Activated naive CD4-positive, alpha-beta T cell treated with anti-CD3 and anti-CD28 coated beads for 36 hours (primary cell): ENCODE measurements at regions of chr6 and their contacts with region 1.

Region 1: GRCh38 chr6:108446629-108447150 is 114.0 kb upstream of the FOXO3 start:
- DNase-seq: no peak
- H3K4me3 Mint-ChIP-seq: no peak overlapping the region
- H3K27ac Mint-ChIP-seq: no peak overlapping the region
- H3K4me1 Mint-ChIP-seq: peaks cover 20% of the 10 kb centered on the region
- H3K27me3 Mint-ChIP-seq: peaks cover 11% of the 10 kb centered on the region

Region 2: DNA sequence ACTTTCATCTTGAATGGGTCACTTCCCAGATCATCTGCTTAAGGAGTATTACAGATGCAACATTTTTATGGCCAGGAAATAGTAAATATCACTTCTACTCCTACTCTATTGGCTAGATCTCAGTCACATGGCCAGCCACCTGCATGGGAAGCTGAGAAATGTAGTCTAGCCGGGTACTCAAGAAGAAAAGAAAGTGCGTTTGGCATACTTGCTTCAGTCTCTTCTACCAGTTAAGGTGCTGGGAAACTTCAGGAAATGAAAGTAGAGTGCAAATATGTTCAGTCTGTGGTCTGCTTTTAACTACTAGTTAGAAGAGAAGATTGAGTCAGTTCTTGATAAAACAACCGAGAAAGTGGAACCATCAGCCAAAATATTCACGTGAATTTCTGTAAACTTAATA is 1116.5 kb before region 1 on chr6:
- CTCF ChIA-PET with region 1: no interaction called
- intact Hi-C with region 1: loop called (anchors 1 kb)
- DNase-seq: peak; percentile 68
- H3K4me3 Mint-ChIP-seq: peak overlapping the region; percentile 33
- H3K27ac Mint-ChIP-seq: peak overlapping the region; percentile 61
- H3K4me1 Mint-ChIP-seq: peaks cover 13% of the 10 kb centered on the region
- H3K27me3 Mint-ChIP-seq: no peaks in the 10 kb centered on the region

Region 3: DNA sequence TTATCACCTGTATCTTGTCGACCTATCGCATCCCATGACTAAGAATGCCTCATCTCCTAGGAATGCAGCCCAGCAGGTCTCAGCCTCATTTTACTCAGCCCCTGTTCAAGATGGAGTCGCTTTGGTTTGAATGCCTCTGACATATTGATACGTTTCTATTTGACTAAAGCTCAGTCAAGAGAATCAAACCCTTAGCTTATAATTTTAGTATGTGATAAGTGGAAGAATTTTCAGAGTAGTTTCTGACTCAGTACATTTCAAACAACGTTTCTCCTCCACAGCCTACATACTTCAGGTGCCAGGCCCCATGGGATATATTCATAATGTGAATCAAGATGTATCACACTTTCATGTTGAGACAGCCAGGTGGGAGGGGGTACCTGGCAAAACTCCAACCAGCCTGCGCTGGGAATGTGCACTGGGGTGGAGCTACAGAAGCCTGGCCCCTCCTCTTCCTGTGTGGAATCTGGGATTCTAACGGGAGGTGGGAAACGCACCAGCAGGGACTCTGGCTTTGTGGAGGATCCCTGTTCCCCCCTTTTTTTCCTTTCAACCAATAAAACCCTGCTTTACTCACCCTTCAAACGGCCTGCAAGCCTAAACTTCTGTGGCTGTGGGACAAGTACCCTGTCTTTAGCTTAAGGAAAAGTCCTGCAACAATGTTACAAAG is 481.9 kb before region 1 on chr6:
- CTCF ChIA-PET with region 1: no interaction called
- intact Hi-C with region 1: loop called (anchors 1 kb)
- DNase-seq: peak; percentile 90
- H3K4me3 Mint-ChIP-seq: no peak overlapping the region
- H3K27ac Mint-ChIP-seq: peak overlapping the region; percentile 92
- H3K4me1 Mint-ChIP-seq: peaks cover 21% of the 10 kb centered on the region
- H3K27me3 Mint-ChIP-seq: no peaks in the 10 kb centered on the region

Region 4: GRCh38 chr6:108260809-108261569 is 185.7 kb before region 1 on chr6 and contains the start of gene SNX3:
- CTCF ChIA-PET with region 1: interaction called, 3 read pairs
- intact Hi-C with region 1: loop called (anchors 1 kb)
- DNase-seq: peak; percentile 90
- H3K4me3 Mint-ChIP-seq: peak within 1 kb of the TSS; percentile 77
- H3K27ac Mint-ChIP-seq: peak within 1 kb of the TSS; percentile 89
- H3K4me1 Mint-ChIP-seq: peaks cover 19% of the 10 kb centered on the region
- H3K27me3 Mint-ChIP-seq: no peaks in the 10 kb centered on the region
- total RNA-seq, gene SNX3: 59.9 to 65.7 TPM

Region 5: GRCh38 chr6:108348655-108349349 is 97.9 kb before region 1 on chr6:
- CTCF ChIA-PET with region 1: no interaction called
- intact Hi-C with region 1: loop called (anchors 1 kb)
- DNase-seq: no peak
- H3K4me3 Mint-ChIP-seq: no peak overlapping the region
- H3K27ac Mint-ChIP-seq: peak overlapping the region; percentile 87
- H3K4me1 Mint-ChIP-seq: peaks cover 10% of the 10 kb centered on the region
- H3K27me3 Mint-ChIP-seq: no peaks in the 10 kb centered on the region

Region 6: GRCh38 chr6:108667993-108668392 is 221.3 kb after region 1 on chr6:
- CTCF ChIA-PET with region 1: no interaction called
- intact Hi-C with region 1: loop called (anchors 1 kb)
- DNase-seq: no peak
- H3K4me3 Mint-ChIP-seq: no peak overlapping the region
- H3K27ac Mint-ChIP-seq: no peak overlapping the region
- H3K4me1 Mint-ChIP-seq: peaks cover 44% of the 10 kb centered on the region
- H3K27me3 Mint-ChIP-seq: no peaks in the 10 kb centered on the region

Region 7: GRCh38 chr6:108883172-108883571 is 436.5 kb after region 1 on chr6:
- CTCF ChIA-PET with region 1: no interaction called
- intact Hi-C with region 1: loop called (anchors 1 kb)
- DNase-seq: no peak
- H3K4me3 Mint-ChIP-seq: no peak overlapping the region
- H3K27ac Mint-ChIP-seq: no peak overlapping the region
- H3K4me1 Mint-ChIP-seq: peaks cover 22% of the 10 kb centered on the region
- H3K27me3 Mint-ChIP-seq: peaks cover 13% of the 10 kb centered on the region